ENCODE measurements at regions of chr3 and their contacts with region 1.

Region 1: DNA sequence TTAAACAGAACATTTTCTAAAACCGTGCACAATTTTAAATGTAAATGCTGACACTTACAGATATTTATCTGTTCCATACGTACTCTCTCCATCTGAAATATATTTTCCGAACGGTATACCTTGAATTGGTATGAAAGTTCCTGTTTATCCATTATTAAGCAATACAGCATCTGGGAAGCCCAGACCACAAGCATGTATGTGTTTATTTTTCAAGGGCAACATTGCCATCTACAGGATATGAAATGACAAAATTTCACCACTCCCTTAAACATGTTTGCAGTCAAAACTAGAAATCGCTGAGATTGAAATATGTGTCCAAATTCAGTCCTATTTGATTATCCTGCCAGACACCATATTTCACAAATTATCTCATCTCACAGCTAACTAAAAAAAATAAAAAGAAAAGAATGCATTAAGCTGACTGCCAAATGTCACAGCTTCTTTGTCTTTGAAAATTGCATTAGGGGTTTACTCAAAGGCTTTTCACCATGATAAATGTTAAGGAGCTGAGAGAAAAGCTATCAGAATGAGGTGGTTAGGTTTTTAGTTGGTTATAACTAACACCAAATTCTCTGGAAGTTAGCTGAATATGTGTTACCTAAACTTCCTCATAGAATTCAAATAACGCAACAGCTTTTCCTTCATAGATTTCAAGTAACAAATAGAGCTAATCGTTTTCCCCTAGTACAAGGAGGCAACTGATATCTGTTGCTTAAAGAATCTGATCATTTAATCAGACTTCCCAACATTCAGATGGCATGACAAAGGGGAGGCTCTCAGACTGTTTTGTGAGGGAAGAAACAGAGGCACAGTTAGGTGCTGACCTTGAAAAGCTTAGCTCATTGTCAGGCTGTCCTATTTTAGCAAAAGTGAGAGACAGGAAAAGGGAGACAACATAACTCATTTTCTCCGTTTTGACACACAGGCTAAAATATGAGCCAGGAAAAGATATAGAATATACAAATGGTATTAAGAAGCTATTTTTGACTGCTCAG is 533.1 kb downstream of the TBL1XR1 start:
- DNase-seq: peak; percentile 78
- H3K4me3 Mint-ChIP-seq: no peak overlapping the region
- H3K27ac Mint-ChIP-seq: no peak overlapping the region
- H3K4me1 Mint-ChIP-seq: no peaks in the 10 kb centered on the region
- H3K27me3 Mint-ChIP-seq: no peaks in the 10 kb centered on the region
- CTCF ChIP-seq: peak; percentile 49

Region 2: DNA sequence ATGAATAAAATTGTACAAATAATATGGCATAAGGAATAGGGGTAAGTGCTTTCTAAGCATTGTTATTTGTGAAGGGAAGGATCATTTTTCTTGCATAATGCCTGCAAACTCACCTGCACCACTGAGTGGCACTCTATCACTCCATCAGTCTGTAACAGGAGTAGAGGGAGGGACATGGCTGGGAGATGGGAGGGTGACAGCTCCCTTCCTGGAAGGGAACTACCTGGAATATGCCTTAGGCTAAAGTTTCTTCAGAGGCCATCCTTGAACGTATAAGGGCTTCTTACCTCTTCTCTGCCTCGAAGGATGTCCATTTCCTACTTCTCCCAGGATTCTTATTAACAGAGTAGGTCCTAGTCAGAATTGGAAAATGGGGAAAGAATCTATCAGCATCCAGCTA is 1802.0 kb before region 1 on chr3:
- CTCF ChIA-PET with region 1: no interaction called
- POLR2A ChIA-PET with region 1: no interaction called
- intact Hi-C with region 1: loop called (anchors 10 kb)
- DNase-seq: peak; percentile 69
- H3K4me3 Mint-ChIP-seq: no peak overlapping the region
- H3K27ac Mint-ChIP-seq: no peak overlapping the region
- H3K4me1 Mint-ChIP-seq: peaks cover 16% of the 10 kb centered on the region
- H3K27me3 Mint-ChIP-seq: no peaks in the 10 kb centered on the region
- CTCF ChIP-seq: peak; percentile 43

Region 3: GRCh38 chr3:176514297-176514696 is 149.8 kb before region 1 on chr3:
- CTCF ChIA-PET with region 1: interaction called, 13 read pairs
- POLR2A ChIA-PET with region 1: no interaction called
- intact Hi-C with region 1: loop called (anchors 1 kb)
- DNase-seq: peak; percentile 54
- H3K4me3 Mint-ChIP-seq: no peak overlapping the region
- H3K27ac Mint-ChIP-seq: no peak overlapping the region
- H3K4me1 Mint-ChIP-seq: no peaks in the 10 kb centered on the region
- H3K27me3 Mint-ChIP-seq: no peaks in the 10 kb centered on the region
- CTCF ChIP-seq: peak; percentile 69

Region 4: GRCh38 chr3:176650478-176650877 is 13.7 kb before region 1 on chr3:
- CTCF ChIA-PET with region 1: interaction called, 15 read pairs
- POLR2A ChIA-PET with region 1: no interaction called
- intact Hi-C with region 1: no loop called
- DNase-seq: peak; percentile 47
- H3K4me3 Mint-ChIP-seq: no peak overlapping the region
- H3K27ac Mint-ChIP-seq: no peak overlapping the region
- H3K4me1 Mint-ChIP-seq: no peaks in the 10 kb centered on the region
- H3K27me3 Mint-ChIP-seq: no peaks in the 10 kb centered on the region
- CTCF ChIP-seq: no peak

Region 5: DNA sequence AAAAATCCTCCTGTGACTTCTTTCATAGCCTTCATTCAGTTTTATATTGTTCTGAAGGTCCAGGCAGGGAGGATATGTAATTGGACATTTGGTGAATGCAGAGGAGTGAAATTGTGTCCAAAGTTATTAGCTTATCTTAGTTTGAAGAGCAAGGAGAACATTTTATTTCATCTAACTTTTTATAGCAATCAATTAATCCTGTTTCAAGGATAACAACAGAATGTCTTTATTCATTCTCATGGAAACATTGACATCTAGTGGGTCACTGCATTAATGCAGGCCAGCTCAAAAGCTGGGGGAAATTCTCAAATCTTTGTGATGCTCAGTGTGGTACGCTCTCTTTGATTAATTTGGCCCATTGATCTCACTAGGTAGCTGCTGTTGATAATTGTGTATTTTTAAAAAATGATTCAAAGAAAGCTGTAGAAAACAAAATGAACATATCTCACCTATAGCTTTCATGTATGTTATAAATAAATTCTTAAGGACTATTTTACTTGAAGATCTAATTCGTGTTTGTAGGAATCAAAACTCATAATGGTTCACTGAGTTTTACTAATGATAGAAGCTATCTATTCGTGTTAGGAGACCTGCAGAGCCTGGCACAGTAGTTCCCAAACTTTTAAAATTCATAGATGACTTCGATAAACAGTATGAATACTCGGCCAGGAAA is 1721.3 kb after region 1 on chr3:
- CTCF ChIA-PET with region 1: interaction called, 4 read pairs
- POLR2A ChIA-PET with region 1: no interaction called
- intact Hi-C with region 1: loop called (anchors 1 kb)
- DNase-seq: peak; percentile 51
- H3K4me3 Mint-ChIP-seq: no peak overlapping the region
- H3K27ac Mint-ChIP-seq: no peak overlapping the region
- H3K4me1 Mint-ChIP-seq: peaks cover 18% of the 10 kb centered on the region
- H3K27me3 Mint-ChIP-seq: no peaks in the 10 kb centered on the region
- CTCF ChIP-seq: peak; percentile 69

Measured in MCF 10A (cell line).